ENCODE measurements at regions of chr11 and their contacts with region 1.

Region 1: GRCh38 chr11:115324581-115325432 is 179.4 kb downstream of the CADM1 start:
- DNase-seq: no peak
- ATAC-seq: peak; percentile 78 to 96 (median 86)
- H3K4me3 ChIP-seq: peak overlapping the region; percentile 39
- H3K27ac ChIP-seq: no peak overlapping the region
- H3K4me1 ChIP-seq: peaks cover 11% of the 10 kb centered on the region
- H3K27me3 ChIP-seq: no peaks in the 10 kb centered on the region
- CTCF ChIP-seq: peak; percentile 84

Region 2: GRCh38 chr11:115660030-115660805 is 335.4 kb after region 1 on chr11:
- intact Hi-C with region 1: loop called in 1 of 2 experiments (anchors 10 kb)
- DNase-seq: no peak
- ATAC-seq: peak in 1 of 4 donors; percentile 40
- H3K4me3 ChIP-seq: peak overlapping the region; percentile 63
- H3K27ac ChIP-seq: no peak overlapping the region
- H3K4me1 ChIP-seq: peaks cover 7% of the 10 kb centered on the region
- H3K27me3 ChIP-seq: peaks cover 0 to 27% (median 0%) of the 10 kb centered on the region in 3 donors
- CTCF ChIP-seq: no peak

Region 3: GRCh38 chr11:115912484-115912945 is 587.7 kb after region 1 on chr11:
- intact Hi-C with region 1: loop called in 1 of 2 experiments (anchors 5 kb)
- DNase-seq: no peak
- ATAC-seq: peak in 3 of 4 donors; percentile 45 to 65 (median 60)
- H3K4me3 ChIP-seq: no peak overlapping the region
- H3K27ac ChIP-seq: no peak overlapping the region
- H3K4me1 ChIP-seq: no peaks in the 10 kb centered on the region
- H3K27me3 ChIP-seq: peaks cover 0 to 13% (median 4%) of the 10 kb centered on the region in 3 donors
- CTCF ChIP-seq: peak; percentile 9

Region 4: GRCh38 chr11:116217006-116217405 is 892.2 kb after region 1 on chr11:
- intact Hi-C with region 1: loop called (anchors 5 kb)
- DNase-seq: no peak
- ATAC-seq: peak in 1 of 4 donors; percentile 57
- H3K4me3 ChIP-seq: no peak overlapping the region
- H3K27ac ChIP-seq: no peak overlapping the region
- H3K4me1 ChIP-seq: no peaks in the 10 kb centered on the region
- H3K27me3 ChIP-seq: peaks cover 0 to 1% (median 0%) of the 10 kb centered on the region in 3 donors
- CTCF ChIP-seq: peak; percentile 47

Region 5: GRCh38 chr11:116224154-116224888 is 899.5 kb after region 1 on chr11:
- intact Hi-C with region 1: loop called (anchors 5 kb)
- DNase-seq: peak in 1 of 2 donors; percentile 28
- ATAC-seq: peak in 2 of 4 donors; percentile 42 to 58
- H3K4me3 ChIP-seq: no peak overlapping the region
- H3K27ac ChIP-seq: no peak overlapping the region
- H3K4me1 ChIP-seq: no peaks in the 10 kb centered on the region
- H3K27me3 ChIP-seq: peaks cover 0 to 17% (median 3%) of the 10 kb centered on the region in 3 donors
- CTCF ChIP-seq: peak; percentile 57

Region 6: GRCh38 chr11:116276051-116277044 is 951.5 kb after region 1 on chr11:
- intact Hi-C with region 1: loop called (anchors 2 to 5 kb)
- DNase-seq: peak; percentile 72 to 83
- ATAC-seq: peak; percentile 70 to 90 (median 80)
- H3K4me3 ChIP-seq: peak overlapping the region; percentile 49
- H3K27ac ChIP-seq: no peak overlapping the region
- H3K4me1 ChIP-seq: no peaks in the 10 kb centered on the region
- H3K27me3 ChIP-seq: peaks cover 0 to 18% (median 2%) of the 10 kb centered on the region in 3 donors
- CTCF ChIP-seq: peak; percentile 96

Measured in psoas muscle (tissue), 8 donors.